ENCODE measurements at regions of chr3 and their contacts with region 1.

Region 1: DNA sequence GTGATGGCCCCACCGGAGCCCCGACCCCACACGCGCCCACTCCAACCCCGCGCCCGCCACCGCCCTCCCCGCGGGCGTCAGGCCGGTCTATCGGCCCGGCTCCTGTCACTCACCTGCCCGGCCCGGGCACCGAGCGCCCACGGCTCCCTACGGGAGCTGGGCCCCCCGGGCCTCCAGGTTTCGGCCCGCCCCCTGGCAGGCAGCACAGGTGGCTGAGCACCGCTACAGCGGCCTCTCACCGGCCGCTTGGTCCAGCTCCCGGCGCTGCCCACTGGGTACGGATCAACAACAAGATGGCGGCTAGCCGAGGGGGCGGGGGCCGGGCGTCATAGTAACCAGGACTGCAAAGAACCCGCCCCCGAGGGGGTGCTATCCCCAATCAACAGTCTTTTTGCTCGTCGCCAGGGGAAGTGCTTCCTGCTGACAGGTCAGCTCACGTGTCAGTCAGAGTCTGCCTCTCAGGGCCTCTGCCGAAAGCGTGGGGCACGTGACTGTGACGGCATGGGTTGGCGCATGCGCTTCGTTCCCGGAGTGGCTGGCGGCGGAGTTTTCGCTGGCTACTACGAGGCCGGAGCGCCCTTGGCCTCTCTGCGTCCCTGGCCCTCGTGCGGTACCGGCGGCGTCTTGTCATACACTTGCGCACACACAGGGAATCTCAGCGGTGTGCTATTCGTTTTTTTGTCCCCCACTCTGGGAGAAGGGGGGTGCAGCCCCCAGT is at the start of gene IP6K1:
- DNase-seq: peak; percentile 100
- ATAC-seq: peak; percentile 99 to 100 (median 100)
- H3K4me3 ChIP-seq: peak within 1 kb of the TSS; percentile 66 to 100 (median 94)
- H3K27ac ChIP-seq: peak within 1 kb of the TSS; percentile 81 to 99 (median 94)
- H3K4me1 ChIP-seq: peaks cover 4 to 60% (median 28%) of the 10 kb centered on the region in 9 donors
- H3K27me3 ChIP-seq: no peaks in the 10 kb centered on the region
- CTCF ChIP-seq: no peak
- total RNA-seq, gene IP6K1: 13.7 to 24.4 (median 16.6) TPM

Region 2: DNA sequence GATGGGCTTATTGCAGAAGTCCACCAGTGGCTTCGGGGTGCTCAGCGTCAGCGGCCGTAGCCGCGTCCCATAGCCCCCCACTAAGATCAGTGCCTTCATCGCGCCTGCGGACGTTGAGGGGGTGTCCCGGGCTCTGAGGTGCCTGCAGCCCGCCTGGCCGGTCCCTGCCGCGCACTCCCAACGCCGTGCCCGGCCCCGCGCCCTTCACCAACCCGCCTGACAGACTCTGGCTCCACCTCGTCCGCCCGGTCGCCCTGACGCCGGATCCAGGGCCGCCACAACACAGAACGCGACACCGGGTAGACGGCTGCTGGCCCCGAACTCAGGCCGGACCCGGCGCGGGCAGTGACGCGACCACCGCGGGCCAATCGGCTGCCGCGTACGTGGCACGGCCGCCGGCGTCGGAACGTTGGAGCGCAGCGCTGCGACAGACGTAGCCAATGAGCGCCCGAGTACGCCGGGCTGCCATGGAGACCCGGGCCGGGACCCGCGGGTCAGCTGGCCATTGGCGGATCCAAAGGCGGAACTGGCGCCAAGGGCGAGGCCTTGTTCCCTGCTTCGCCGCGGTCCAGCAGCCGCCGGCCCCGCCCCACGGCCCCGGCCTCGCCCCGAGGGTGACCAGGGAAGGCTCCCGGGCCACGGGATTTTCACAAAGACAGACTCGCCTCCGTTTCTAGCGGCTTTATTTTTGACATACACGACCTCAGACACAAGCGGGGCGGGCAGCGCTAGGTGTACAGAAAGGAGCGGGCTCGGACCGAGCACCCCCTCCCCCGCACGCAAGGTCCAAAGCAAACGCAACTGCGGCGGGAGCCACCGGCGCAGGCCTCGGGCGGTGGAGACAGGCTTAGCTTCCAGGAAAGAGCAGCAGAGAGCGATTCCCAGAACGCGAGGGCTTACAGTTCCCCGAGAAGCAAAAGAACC is 62.5 kb before region 1 on chr3 and contains the start of gene GMPPB:
- intact Hi-C with region 1: loop called in 1 of 10 experiments (anchors 5 kb)
- DNase-seq: peak; percentile 97 to 98
- ATAC-seq: peak; percentile 87 to 93 (median 92)
- H3K4me3 ChIP-seq: peak within 1 kb of the TSS; percentile 68 to 100 (median 94)
- H3K27ac ChIP-seq: peak within 1 kb of the TSS; percentile 53 to 98 (median 93)
- H3K4me1 ChIP-seq: peaks cover 12 to 44% (median 30%) of the 10 kb centered on the region in 9 donors
- H3K27me3 ChIP-seq: no peaks in the 10 kb centered on the region
- CTCF ChIP-seq: no peak
- total RNA-seq, gene GMPPB: 9.6 to 30.4 (median 12.9) TPM

Region 3: DNA sequence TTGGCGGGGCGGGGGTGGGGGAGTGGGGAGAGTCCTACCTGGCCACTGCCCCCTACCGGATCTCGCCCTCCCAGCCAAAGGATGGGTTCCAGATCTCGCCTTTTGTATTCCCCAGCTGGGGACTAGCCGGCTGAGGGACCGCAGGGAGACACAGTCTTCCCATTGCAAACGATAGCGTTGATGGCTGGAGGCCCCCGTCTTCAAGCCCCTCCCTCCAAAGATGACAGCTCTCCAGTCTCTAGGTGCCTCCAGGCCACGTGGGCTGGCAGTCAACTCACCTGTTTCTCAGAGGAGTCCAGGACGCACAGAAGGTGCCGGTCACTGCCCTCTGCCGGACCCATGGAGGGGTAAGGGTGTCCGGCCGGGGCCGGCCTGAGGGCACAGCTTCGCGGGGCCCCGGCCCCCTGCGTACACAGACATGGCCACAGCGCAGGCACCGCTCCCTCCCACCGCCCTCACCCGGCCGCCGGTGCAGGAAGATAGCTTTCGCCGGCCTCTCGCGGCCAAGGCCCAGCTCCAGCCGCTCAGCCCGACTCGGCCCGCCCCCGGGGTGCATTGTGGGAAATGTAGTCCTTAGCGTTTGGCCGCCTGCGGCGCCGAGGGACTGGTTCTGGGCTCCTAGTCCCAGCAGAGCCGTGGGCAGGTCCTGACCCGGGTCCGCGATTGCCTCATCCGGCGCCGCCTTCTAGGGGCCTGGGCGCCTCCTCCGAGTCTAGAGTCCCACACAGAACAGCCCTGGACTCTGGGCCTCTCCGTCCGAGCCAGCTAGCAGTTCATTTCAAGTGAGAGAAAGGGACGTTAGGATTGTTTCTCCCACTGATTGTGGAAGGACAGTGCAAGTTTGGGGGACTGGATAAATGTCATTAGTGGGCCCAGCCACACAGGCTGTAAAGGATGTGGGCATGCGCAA is 143.2 kb after region 1 on chr3 and contains the start of gene MON1A:
- intact Hi-C with region 1: loop called in 1 of 10 experiments (anchors 5 kb)
- DNase-seq: peak; percentile 97 to 98
- ATAC-seq: peak; percentile 98 to 100 (median 99)
- H3K4me3 ChIP-seq: peak within 1 kb of the TSS; percentile 34 to 96 (median 78)
- H3K27ac ChIP-seq: peak within 1 kb of the TSS; percentile 76 to 95 (median 90)
- H3K4me1 ChIP-seq: peaks cover 0 to 35% (median 21%) of the 10 kb centered on the region in 9 donors
- H3K27me3 ChIP-seq: no peaks in the 10 kb centered on the region
- CTCF ChIP-seq: peak in 7 of 9 donors; percentile 17 to 57 (median 37)
- total RNA-seq, gene MON1A: 5.3 to 8.2 (median 6.7) TPM

Measured in heart right ventricle (tissue), 16 donors.